AG04449 (cell line): ENCODE measurements at regions of chr1 and their contacts with region 1.

Region 1: DNA sequence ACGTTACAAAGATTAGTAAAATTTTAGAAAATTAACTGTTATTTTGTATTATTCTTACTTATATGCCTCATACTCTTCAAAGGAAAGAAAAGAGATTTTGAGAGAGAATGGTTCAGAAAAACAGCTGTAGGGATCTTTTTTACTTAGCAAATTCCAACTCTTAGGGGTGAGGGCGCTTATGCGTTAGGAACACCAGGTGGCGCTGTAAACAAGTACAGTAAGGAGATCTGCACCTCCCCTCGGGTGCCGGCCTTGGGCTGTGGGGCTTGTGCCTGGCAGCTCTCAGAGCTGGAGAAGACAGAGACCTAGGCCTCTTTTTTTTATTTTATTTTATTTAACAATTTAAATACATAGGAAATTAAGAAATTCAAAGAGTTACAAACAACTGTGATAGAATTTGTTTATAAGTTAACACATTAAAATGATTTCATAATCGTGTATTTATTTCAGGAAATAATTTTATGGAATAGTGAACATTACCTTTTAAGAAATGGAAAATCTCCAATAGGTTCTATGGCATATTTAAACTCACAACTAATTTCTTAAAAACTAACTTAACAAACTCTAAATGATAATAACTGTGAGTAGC is 32.6 kb downstream of the UTP25 start:
- DNase-seq: peak; percentile 46
- H3K4me3 ChIP-seq: no peak overlapping the region
- CTCF ChIP-seq: peak; percentile 82

Region 2: GRCh38 chr1:209839875-209840491 is 20.4 kb before region 1 on chr1:
- CTCF ChIA-PET with region 1: interaction called, 133 read pairs
- POLR2A ChIA-PET with region 1: no interaction called
- DNase-seq: peak; percentile 87
- H3K4me3 ChIP-seq: no peak overlapping the region; the same call in 1 of the 2 replicates
- CTCF ChIP-seq: no peak

Region 3: GRCh38 chr1:209875515-209875914 is 15.1 kb after region 1 on chr1:
- CTCF ChIA-PET with region 1: interaction called, 82 read pairs
- POLR2A ChIA-PET with region 1: no interaction called
- DNase-seq: peak; percentile 36
- H3K4me3 ChIP-seq: peak overlapping the region; percentile 19; the same call in 1 of the 2 replicates
- CTCF ChIP-seq: peak; percentile 78

Region 4: GRCh38 chr1:209884665-209885117 is 24.3 kb after region 1 on chr1:
- CTCF ChIA-PET with region 1: interaction called, 54 read pairs
- POLR2A ChIA-PET with region 1: no interaction called
- DNase-seq: peak; percentile 97
- H3K4me3 ChIP-seq: no peak overlapping the region
- CTCF ChIP-seq: no peak

Region 5: GRCh38 chr1:210001751-210002150 is 141.4 kb after region 1 on chr1:
- CTCF ChIA-PET with region 1: interaction called, 522 read pairs
- POLR2A ChIA-PET with region 1: no interaction called
- DNase-seq: no peak
- H3K4me3 ChIP-seq: no peak overlapping the region
- CTCF ChIP-seq: no peak

Region 6: DNA sequence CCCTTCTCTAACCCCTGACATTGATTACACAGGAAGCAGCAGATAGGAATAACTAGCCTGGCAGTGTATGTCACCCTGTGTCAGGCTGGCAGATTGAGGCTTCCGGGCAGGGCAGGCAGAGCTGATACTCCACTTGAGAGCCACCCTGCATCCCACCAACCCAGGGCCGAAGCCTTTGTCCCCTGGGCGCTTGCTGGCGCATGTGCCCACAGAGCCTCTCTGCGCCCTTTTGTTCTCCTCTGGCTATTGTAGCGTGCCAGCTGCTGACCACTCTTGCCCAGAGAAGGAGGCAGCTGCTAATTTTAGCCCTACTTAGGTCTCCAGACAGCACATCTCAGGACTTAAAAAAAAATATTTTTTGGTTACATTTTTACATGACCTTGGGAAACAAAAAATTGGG is 773.2 kb after region 1 on chr1:
- CTCF ChIA-PET with region 1: no interaction called
- POLR2A ChIA-PET with region 1: no interaction called
- DNase-seq: no peak
- H3K4me3 ChIP-seq: no peak overlapping the region
- CTCF ChIP-seq: no peak